ENCODE measurements at regions of chr5 and their contacts with region 1.

Region 1: DNA sequence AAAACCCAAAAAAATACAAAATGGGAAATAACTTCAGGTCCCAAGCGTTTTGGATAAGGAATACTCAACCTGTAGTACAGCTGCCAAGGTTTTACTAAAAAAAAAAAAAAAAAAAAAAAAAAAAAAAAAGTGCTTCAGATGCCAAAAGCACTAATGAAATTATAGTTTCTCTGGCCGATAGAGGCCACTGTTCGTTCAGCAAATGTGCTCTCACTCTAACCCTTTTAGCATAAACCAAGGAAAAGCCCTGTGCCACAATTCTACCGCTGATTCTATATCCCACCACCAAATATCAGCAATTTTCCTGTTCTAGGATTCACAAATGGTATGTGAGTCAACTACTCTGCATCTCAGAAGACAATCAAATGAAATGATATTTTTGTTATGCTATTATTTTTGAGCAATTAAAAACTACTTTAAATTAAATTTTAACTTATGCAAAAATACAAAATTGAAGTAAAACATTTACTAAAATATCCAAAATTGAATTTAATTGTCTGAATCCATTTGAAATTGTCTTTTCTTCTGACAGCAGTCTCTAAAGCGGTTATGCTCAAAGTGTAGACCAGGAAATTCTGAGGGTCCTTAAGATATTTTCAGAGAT is 79.8 kb downstream of the RICTOR start:
- DNase-seq: no peak
- ATAC-seq: peak; percentile 78
- H3K4me3 ChIP-seq: no peak overlapping the region
- H3K27ac ChIP-seq: no peak overlapping the region
- H3K4me1 ChIP-seq: no peaks in the 10 kb centered on the region
- H3K27me3 ChIP-seq: no peaks in the 10 kb centered on the region
- CTCF ChIP-seq: peak; percentile 57; the same call in 1 of the 2 replicates

Region 2: GRCh38 chr5:38237681-38238080 is 756.7 kb before region 1 on chr5:
- CTCF ChIA-PET with region 1: no interaction called
- POLR2A ChIA-PET with region 1: interaction called, 11 read pairs
- in situ Hi-C with region 1: no loop called
- intact Hi-C with region 1: no loop called
- DNase-seq: no peak
- ATAC-seq: no peak
- H3K4me3 ChIP-seq: no peak overlapping the region
- H3K27ac ChIP-seq: no peak overlapping the region
- H3K4me1 ChIP-seq: no peaks in the 10 kb centered on the region
- H3K27me3 ChIP-seq: peaks cover 16% of the 10 kb centered on the region
- CTCF ChIP-seq: no peak

Region 3: DNA sequence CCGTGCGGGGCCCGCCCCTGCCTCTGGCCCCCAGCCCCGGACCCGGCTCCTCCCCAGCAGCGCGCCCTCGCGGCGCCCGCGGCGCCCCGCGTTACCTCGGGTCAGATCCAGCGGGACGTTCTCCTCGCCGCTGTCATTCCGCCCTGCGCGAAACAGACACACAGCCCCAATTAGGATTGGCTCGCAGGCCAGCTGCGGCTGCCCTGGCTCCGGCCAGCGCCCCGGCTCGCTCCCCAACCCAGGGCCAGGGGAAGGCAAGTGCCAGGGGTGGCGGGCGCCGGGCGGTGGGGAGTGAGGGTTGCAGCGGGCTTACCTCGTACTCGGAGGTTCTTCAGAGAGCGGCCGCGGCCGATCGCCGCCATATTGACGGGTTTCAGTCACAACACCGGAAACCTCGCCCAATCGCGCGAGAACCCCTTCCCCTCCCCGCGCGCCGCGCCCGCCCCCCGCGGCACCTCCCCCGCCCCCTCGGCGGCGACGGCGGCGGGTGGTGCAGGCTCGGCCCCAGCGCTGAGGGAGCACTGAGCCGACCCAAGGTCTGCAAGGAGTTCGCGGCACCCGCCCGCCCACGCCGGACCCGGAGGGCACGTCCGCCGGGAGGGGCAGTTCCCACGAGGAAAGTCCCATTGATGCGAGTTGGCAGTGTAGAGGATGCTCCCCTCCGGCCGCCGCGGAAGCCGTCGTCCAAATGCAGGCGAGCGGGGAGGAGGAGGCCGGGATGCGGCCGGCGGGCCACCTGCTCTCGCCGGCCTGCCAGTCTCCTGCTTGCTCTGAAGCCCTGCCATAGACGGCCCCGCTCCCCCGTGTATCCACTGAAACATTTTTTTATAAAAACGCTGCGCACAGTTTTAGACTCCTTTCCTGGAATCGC is 79.8 kb after region 1 on chr5 and contains the start of gene RICTOR:
- CTCF ChIA-PET with region 1: no interaction called
- POLR2A ChIA-PET with region 1: no interaction called
- in situ Hi-C with region 1: no loop called
- intact Hi-C with region 1: loop called (anchors 5 kb)
- DNase-seq: no peak
- ATAC-seq: peak; percentile 94
- H3K4me3 ChIP-seq: peak within 1 kb of the TSS; percentile 88 to 97
- H3K27ac ChIP-seq: peak within 1 kb of the TSS; percentile 79
- H3K4me1 ChIP-seq: peaks cover 23% of the 10 kb centered on the region; the same call in 1 of the 2 replicates
- H3K27me3 ChIP-seq: no peaks in the 10 kb centered on the region
- CTCF ChIP-seq: no peak
- total RNA-seq, gene RICTOR: 21.3 TPM

Measured in Panc1 (cell line).